ENCODE measurements at regions of chr5 and their contacts with region 1.

Region 1: GRCh38 chr5:125026896-125027732 is 280.7 kb upstream of the ZNF608 start:
- DNase-seq: no peak
- ATAC-seq: no peak
- H3K4me3 ChIP-seq: no peak overlapping the region
- H3K27ac ChIP-seq: no peak overlapping the region
- H3K4me1 ChIP-seq: no peaks in the 10 kb centered on the region
- H3K27me3 ChIP-seq: no peaks in the 10 kb centered on the region
- CTCF ChIP-seq: no peak
- POLR2A ChIP-seq: no peak

Region 2: GRCh38 chr5:123802298-123802951 is 1224.7 kb before region 1 on chr5:
- in situ Hi-C with region 1: no loop called
- intact Hi-C with region 1: loop called (anchors 5 kb)
- DNase-seq: no peak
- ATAC-seq: no peak
- H3K4me3 ChIP-seq: no peak overlapping the region
- H3K27ac ChIP-seq: no peak overlapping the region
- H3K4me1 ChIP-seq: peaks cover 5 to 7% of the 10 kb centered on the region in 2 donors
- H3K27me3 ChIP-seq: no peaks in the 10 kb centered on the region
- CTCF ChIP-seq: no peak
- POLR2A ChIP-seq: no peak

Region 3: DNA sequence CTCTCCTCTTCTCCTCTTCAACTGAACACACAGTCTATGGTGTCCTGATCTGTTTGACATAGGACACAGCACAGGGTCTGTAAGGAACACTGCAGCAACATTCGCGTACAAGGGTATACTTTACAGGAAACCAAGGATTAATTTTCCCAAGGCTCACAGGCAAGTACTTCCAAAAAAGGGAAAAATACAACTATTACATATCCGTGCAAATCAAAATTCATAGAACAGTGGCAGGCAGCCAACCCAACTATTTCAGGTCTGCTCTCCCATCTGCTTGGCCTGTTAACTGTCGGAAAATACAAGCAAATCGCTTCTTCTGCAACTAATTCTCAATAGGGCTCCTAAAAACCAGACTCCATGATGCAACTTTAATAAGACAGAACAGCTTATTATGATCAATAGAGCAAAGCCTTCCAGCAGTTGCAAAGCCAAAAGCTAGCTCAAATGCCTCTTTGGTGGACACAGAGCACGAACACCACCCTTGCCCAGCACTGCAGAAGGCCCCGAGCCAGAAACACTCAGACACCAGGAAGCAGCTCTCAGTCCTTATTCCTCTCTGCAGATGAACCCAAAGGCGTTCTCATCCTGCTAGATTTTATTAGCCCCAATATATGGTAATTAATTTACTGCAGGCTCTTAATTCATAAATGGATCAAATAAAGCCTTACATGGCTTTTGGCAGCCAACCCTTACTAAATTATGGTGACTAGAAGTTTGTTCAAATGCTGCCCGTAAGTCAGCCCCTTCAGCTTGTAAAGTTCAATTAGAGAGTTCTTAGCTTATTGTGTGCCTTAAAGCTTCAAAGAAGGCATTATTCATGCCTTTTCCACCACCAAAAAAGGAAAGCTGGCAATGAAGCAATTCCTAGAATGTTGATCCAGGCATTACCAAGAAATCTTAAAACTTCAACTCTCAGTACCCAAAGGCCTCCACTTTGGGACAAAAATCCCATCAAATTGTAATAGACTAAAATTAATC is 349.5 kb before region 1 on chr5:
- in situ Hi-C with region 1: no loop called
- intact Hi-C with region 1: no loop called
- DNase-seq: no peak
- ATAC-seq: peak in 1 of 2 donors; percentile 23
- H3K4me3 ChIP-seq: no peak overlapping the region
- H3K27ac ChIP-seq: peak overlapping the region in 3 of 4 donors; percentile 16 to 41 (median 23)
- H3K4me1 ChIP-seq: peaks cover 38 to 46% of the 10 kb centered on the region in 2 donors
- H3K27me3 ChIP-seq: no peaks in the 10 kb centered on the region
- CTCF ChIP-seq: no peak
- POLR2A ChIP-seq: no peak

Measured in gastrocnemius medialis (tissue), 4 donors.